ENCODE measurements at regions of chr7 and their contacts with region 1.

Region 1: DNA sequence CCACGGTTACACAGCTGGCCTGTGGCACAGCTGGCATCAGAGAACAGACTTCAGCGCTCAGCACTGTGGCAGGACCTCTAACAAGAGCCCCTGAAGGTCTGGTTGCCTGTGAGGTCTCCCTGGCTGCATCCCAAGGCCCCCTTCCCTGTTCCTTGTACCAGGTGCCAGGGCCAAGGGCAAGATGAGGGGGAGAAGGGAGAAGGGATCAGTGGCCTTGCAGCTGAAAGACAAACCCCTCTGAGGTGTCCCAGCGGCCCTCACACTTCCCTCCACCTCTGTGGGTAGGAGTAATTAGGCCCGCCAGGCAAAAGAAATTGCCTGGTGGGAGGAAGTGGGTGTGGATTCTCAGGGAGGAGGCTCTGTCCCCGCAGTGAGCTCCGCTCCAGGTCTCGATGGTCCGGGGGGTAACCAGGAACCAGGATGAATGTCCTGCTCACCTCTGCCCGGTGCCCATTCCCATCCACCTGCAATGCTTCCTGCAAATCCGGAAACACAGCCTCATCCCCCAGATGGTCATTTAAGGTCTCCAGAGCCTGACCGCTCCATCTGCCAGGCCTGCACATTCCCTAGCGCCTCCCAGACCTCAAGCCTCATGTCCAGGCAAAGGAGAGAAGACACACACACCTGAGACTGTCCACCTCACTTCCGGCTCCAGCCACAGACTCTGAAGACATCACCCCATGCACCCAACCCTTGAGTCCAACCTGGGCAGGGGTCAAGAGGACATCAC is 22.7 kb downstream of the GRID2IP start:
- DNase-seq: no peak
- H3K4me3 ChIP-seq: no peak overlapping the region
- H3K4me3 Mint-ChIP-seq: no peak overlapping the region
- H3K27ac Mint-ChIP-seq: no peak overlapping the region
- H3K4me1 ChIP-seq: no peaks in the 10 kb centered on the region
- H3K4me1 Mint-ChIP-seq: no peaks in the 10 kb centered on the region
- H3K27me3 ChIP-seq: no peaks in the 10 kb centered on the region; the same call in 1 of the 2 replicates
- H3K27me3 Mint-ChIP-seq: peaks cover 23% of the 10 kb centered on the region
- CTCF ChIP-seq: no peak

Region 2: DNA sequence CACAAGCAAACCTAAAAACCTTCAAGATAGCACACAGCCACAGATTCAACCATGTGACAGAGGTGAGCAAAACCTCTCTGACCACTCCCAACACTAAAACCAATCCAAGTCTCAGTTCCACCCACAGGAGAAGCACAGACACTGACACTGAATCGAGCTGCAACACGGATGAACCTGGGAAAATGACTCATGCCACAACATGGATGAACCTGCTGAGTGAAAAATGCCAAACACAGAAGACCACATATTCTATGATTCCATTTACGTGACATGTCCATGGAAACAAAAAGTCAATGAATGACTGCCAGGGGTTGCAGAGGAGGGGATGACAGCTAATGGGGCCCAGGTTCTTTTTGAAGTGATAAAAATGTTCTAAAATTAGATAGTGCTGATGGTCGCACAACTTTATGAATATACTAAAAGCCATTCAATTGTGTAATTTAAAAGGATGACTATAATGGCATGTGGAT is 278.2 kb before region 1 on chr7:
- CTCF ChIA-PET with region 1: no interaction called
- POLR2A ChIA-PET with region 1: no interaction called
- intact Hi-C with region 1: no loop called
- DNase-seq: no peak
- H3K4me3 ChIP-seq: no peak overlapping the region
- H3K4me3 Mint-ChIP-seq: no peak overlapping the region
- H3K27ac Mint-ChIP-seq: no peak overlapping the region
- H3K4me1 ChIP-seq: 0 out of 2 replicates have a peak, but pooled peaks cover 2% of the 10 kb centered on the region
- H3K4me1 Mint-ChIP-seq: peaks cover 18% of the 10 kb centered on the region
- H3K27me3 ChIP-seq: no peaks in the 10 kb centered on the region
- H3K27me3 Mint-ChIP-seq: no peaks in the 10 kb centered on the region
- CTCF ChIP-seq: no peak

Region 3: DNA sequence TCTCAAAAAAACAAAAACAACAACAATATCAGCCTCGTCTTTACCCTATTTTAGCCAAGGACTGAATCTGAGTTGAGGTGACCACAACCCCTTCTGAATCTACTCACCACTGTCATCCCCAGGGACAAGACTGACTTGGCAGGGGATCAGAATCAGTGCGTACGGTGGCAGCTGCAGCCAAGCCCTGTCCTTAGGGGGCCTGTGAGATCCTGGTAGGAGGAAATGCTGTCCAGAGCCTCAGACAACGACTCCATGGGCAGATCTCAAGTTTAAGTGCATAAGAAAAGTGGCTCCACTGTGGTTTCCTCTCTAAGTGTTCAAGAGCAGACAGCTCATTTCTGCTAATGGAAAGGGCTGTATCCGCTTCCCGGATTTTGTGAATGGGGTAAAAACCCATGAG is 233.7 kb before region 1 on chr7:
- CTCF ChIA-PET with region 1: no interaction called
- POLR2A ChIA-PET with region 1: no interaction called
- intact Hi-C with region 1: no loop called
- DNase-seq: no peak
- H3K4me3 ChIP-seq: no peak overlapping the region
- H3K4me3 Mint-ChIP-seq: no peak overlapping the region
- H3K27ac Mint-ChIP-seq: no peak overlapping the region
- H3K4me1 ChIP-seq: no peaks in the 10 kb centered on the region
- H3K4me1 Mint-ChIP-seq: peaks cover 5% of the 10 kb centered on the region
- H3K27me3 ChIP-seq: no peaks in the 10 kb centered on the region
- H3K27me3 Mint-ChIP-seq: no peaks in the 10 kb centered on the region
- CTCF ChIP-seq: no peak

Region 4: GRCh38 chr7:6447581-6448199 is 80.9 kb before region 1 on chr7 and contains the start of gene DAGLB:
- CTCF ChIA-PET with region 1: no interaction called
- POLR2A ChIA-PET with region 1: interaction called, 10 read pairs
- intact Hi-C with region 1: no loop called
- DNase-seq: peak; percentile 93 to 96
- H3K4me3 ChIP-seq: peak within 1 kb of the TSS; percentile 97
- H3K4me3 Mint-ChIP-seq: peak within 1 kb of the TSS; percentile 86
- H3K27ac Mint-ChIP-seq: peak within 1 kb of the TSS; percentile 95
- H3K4me1 ChIP-seq: no peaks in the 10 kb centered on the region
- H3K4me1 Mint-ChIP-seq: peaks cover 16% of the 10 kb centered on the region
- H3K27me3 ChIP-seq: no peaks in the 10 kb centered on the region
- H3K27me3 Mint-ChIP-seq: no peaks in the 10 kb centered on the region
- CTCF ChIP-seq: no peak
- total RNA-seq, gene DAGLB: 25.8 and 32.6 TPM in 2 replicates

Region 5: GRCh38 chr7:6545398-6546126 is 17.0 kb after region 1 on chr7:
- CTCF ChIA-PET with region 1: no interaction called
- POLR2A ChIA-PET with region 1: no interaction called
- intact Hi-C with region 1: no loop called
- DNase-seq: no peak
- H3K4me3 ChIP-seq: no peak overlapping the region
- H3K4me3 Mint-ChIP-seq: no peak overlapping the region
- H3K27ac Mint-ChIP-seq: no peak overlapping the region
- H3K4me1 ChIP-seq: no peaks in the 10 kb centered on the region
- H3K4me1 Mint-ChIP-seq: no peaks in the 10 kb centered on the region
- H3K27me3 ChIP-seq: no peaks in the 10 kb centered on the region
- H3K27me3 Mint-ChIP-seq: peaks cover 3% of the 10 kb centered on the region
- CTCF ChIP-seq: no peak

Region 6: GRCh38 chr7:6577365-6578113 is 49.0 kb after region 1 on chr7 and contains the start of gene ZDHHC4:
- CTCF ChIA-PET with region 1: no interaction called
- POLR2A ChIA-PET with region 1: no interaction called
- intact Hi-C with region 1: no loop called
- DNase-seq: peak; percentile 89 to 91
- H3K4me3 ChIP-seq: peak within 1 kb of the TSS; percentile 58
- H3K4me3 Mint-ChIP-seq: peak within 1 kb of the TSS; percentile 92
- H3K27ac Mint-ChIP-seq: peak within 1 kb of the TSS; percentile 96
- H3K4me1 ChIP-seq: peaks cover 12% of the 10 kb centered on the region
- H3K4me1 Mint-ChIP-seq: peaks cover 14% of the 10 kb centered on the region
- H3K27me3 ChIP-seq: no peaks in the 10 kb centered on the region
- H3K27me3 Mint-ChIP-seq: no peaks in the 10 kb centered on the region
- CTCF ChIP-seq: no peak
- total RNA-seq, gene ZDHHC4: 69.9 and 78.9 TPM in 2 replicates

Measured in Caco-2 (cell line).